MCF 10A (cell line): ENCODE measurements at regions of chr2 and their contacts with region 1.

Region 1: GRCh38 chr2:191811807-191812602 is 34.9 kb downstream of the CAVIN2 start:
- DNase-seq: peak; percentile 72
- H3K4me3 Mint-ChIP-seq: no peak overlapping the region
- H3K27ac Mint-ChIP-seq: no peak overlapping the region
- H3K4me1 Mint-ChIP-seq: no peaks in the 10 kb centered on the region
- H3K27me3 Mint-ChIP-seq: no peaks in the 10 kb centered on the region
- CTCF ChIP-seq: peak; percentile 76

Region 2: GRCh38 chr2:191789796-191790195 is 22.2 kb before region 1 on chr2:
- CTCF ChIA-PET with region 1: interaction called, 20 read pairs
- POLR2A ChIA-PET with region 1: no interaction called
- intact Hi-C with region 1: no loop called
- DNase-seq: no peak
- H3K4me3 Mint-ChIP-seq: no peak overlapping the region
- H3K27ac Mint-ChIP-seq: no peak overlapping the region
- H3K4me1 Mint-ChIP-seq: no peaks in the 10 kb centered on the region
- H3K27me3 Mint-ChIP-seq: no peaks in the 10 kb centered on the region
- CTCF ChIP-seq: no peak

Region 3: GRCh38 chr2:191831410-191831994 is 19.5 kb after region 1 on chr2:
- CTCF ChIA-PET with region 1: interaction called, 12 read pairs
- POLR2A ChIA-PET with region 1: no interaction called
- intact Hi-C with region 1: no loop called
- DNase-seq: no peak
- H3K4me3 Mint-ChIP-seq: no peak overlapping the region
- H3K27ac Mint-ChIP-seq: no peak overlapping the region
- H3K4me1 Mint-ChIP-seq: no peaks in the 10 kb centered on the region
- H3K27me3 Mint-ChIP-seq: no peaks in the 10 kb centered on the region
- CTCF ChIP-seq: no peak

Region 4: GRCh38 chr2:191869178-191869577 is 57.2 kb after region 1 on chr2:
- CTCF ChIA-PET with region 1: interaction called, 23 read pairs
- POLR2A ChIA-PET with region 1: interaction called, 3 read pairs
- intact Hi-C with region 1: loop called (anchors 1 kb)
- DNase-seq: peak; percentile 60
- H3K4me3 Mint-ChIP-seq: no peak overlapping the region
- H3K27ac Mint-ChIP-seq: peak overlapping the region; percentile 20
- H3K4me1 Mint-ChIP-seq: peaks cover 50% of the 10 kb centered on the region
- H3K27me3 Mint-ChIP-seq: no peaks in the 10 kb centered on the region
- CTCF ChIP-seq: no peak

Region 5: GRCh38 chr2:192162392-192163042 is 350.5 kb after region 1 on chr2:
- CTCF ChIA-PET with region 1: interaction called, 342 read pairs
- POLR2A ChIA-PET with region 1: interaction called, 25 read pairs
- intact Hi-C with region 1: loop called (anchors 1 kb)
- DNase-seq: peak; percentile 76
- H3K4me3 Mint-ChIP-seq: no peak overlapping the region
- H3K27ac Mint-ChIP-seq: no peak overlapping the region
- H3K4me1 Mint-ChIP-seq: peaks cover 9% of the 10 kb centered on the region
- H3K27me3 Mint-ChIP-seq: no peaks in the 10 kb centered on the region
- CTCF ChIP-seq: peak; percentile 85